Activated CD4-positive, alpha-beta memory T cell treated with anti-CD3 and anti-CD28 coated beads, Interleukin-2, amount 10 ng/mL, durations not matched to agents 7 days and 5 days (primary cell): ENCODE measurements at regions of chr20 and their contacts with region 1.

Region 1: GRCh38 chr20:3786665-3787323 is at the start of gene CENPB:
- DNase-seq: peak; percentile 92
- H3K4me3 Mint-ChIP-seq: peak within 1 kb of the TSS; percentile 81
- H3K27ac Mint-ChIP-seq: peak within 1 kb of the TSS; percentile 77
- H3K4me1 Mint-ChIP-seq: peaks cover 45% of the 10 kb centered on the region
- H3K27me3 Mint-ChIP-seq: no peaks in the 10 kb centered on the region
- total RNA-seq, gene CENPB: 67.0 to 68.0 TPM

Region 2: DNA sequence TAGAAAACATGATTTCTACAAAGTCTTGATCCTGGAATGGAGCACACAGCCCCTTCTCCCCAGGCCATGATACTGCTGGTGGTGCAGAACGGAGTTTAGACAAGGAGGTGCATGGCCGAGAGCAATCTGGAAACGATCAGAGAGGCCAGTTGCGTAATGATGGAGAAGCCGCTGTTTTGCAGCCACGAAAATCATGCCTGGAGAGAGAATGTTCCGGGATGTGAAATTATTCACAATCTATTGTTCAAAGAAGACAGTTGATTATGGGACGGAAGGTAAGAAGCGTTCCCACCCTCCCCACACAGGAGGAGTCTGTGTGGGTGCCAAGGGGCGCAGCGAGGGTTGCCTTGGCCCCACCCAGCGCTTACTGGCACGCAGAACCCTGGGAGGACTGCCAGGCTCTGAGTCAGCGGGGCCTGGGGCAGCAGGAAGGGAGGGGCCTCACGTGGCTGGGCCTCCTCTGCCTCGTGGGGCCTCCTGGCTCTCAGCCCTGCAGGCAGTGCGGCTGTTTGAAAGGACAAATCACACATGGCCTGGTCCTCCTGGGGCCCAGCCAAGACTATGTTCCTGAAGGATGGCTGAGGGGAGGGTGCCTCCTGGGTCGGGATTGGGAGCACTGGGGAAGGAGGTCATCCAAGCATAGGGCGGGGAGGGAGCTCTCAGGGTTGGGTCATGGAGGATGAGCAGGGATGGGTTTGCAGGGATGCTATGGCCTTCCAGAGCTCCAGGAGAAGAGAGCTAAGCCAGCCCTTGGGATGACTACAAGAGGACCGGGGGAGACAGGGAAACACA is 24.9 kb after region 1 on chr20:
- CTCF ChIA-PET with region 1: interaction called, 7 read pairs
- POLR2A ChIA-PET with region 1: interaction called, 57 read pairs
- DNase-seq: peak; percentile 94
- H3K4me3 Mint-ChIP-seq: peak overlapping the region; percentile 71
- H3K27ac Mint-ChIP-seq: peak overlapping the region; percentile 99
- H3K4me1 Mint-ChIP-seq: peaks cover 81% of the 10 kb centered on the region
- H3K27me3 Mint-ChIP-seq: no peaks in the 10 kb centered on the region

Region 3: DNA sequence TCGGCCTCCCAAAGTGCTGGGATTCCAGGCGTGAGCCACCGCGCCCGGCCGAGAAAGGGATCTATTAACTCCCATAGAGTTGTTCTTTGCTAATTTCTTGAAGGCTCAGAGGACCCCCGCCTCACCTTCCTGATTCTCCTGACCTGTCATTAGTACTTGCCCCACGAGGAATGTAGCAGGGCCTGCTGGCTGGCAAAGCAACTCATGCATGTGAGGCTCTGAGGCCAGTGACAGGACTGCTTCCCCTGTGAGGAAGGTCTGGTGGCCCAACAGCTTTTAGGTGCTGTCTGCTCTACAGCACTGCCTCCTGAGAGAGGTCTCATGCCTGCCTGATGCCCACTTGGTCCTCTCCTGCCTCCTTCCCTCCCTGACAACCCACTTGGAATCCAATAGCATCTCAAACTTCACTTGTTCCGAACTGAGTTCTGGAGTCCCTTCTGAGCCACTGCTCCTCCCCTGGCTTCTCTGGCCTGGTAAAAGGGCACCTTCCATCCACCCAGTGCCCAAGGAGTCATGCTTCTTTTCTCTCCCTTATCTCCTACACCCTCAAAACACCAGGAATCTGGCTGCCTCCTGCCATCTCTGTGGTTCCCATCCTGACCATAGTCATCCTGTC is 61.7 kb after region 1 on chr20:
- CTCF ChIA-PET with region 1: interaction called, 46 read pairs
- POLR2A ChIA-PET with region 1: interaction called, 10 read pairs
- DNase-seq: no peak
- H3K4me3 Mint-ChIP-seq: peak overlapping the region; percentile 87
- H3K27ac Mint-ChIP-seq: peak overlapping the region; percentile 61
- H3K4me1 Mint-ChIP-seq: peaks cover 37% of the 10 kb centered on the region
- H3K27me3 Mint-ChIP-seq: no peaks in the 10 kb centered on the region

Region 4: GRCh38 chr20:3854462-3854871 is 67.7 kb after region 1 on chr20:
- CTCF ChIA-PET with region 1: interaction called, 46 read pairs
- POLR2A ChIA-PET with region 1: interaction called, 10 read pairs
- DNase-seq: no peak
- H3K4me3 Mint-ChIP-seq: no peak overlapping the region
- H3K27ac Mint-ChIP-seq: no peak overlapping the region
- H3K4me1 Mint-ChIP-seq: peaks cover 6% of the 10 kb centered on the region
- H3K27me3 Mint-ChIP-seq: no peaks in the 10 kb centered on the region

Region 5: GRCh38 chr20:4082406-4083097 is 295.8 kb after region 1 on chr20:
- CTCF ChIA-PET with region 1: interaction called, 14 read pairs
- POLR2A ChIA-PET with region 1: no interaction called
- DNase-seq: peak; percentile 75
- H3K4me3 Mint-ChIP-seq: peak overlapping the region; percentile 28
- H3K27ac Mint-ChIP-seq: peak overlapping the region; percentile 88
- H3K4me1 Mint-ChIP-seq: peaks cover 55% of the 10 kb centered on the region
- H3K27me3 Mint-ChIP-seq: no peaks in the 10 kb centered on the region